Heart left ventricle (tissue), 16 donors: ENCODE measurements at regions of chr15 and their contacts with region 1.

Region 1: GRCh38 chr15:59492389-59493377 is 54.7 kb downstream of the FAM81A start:
- DNase-seq: peak in 4 of 5 donors; percentile 50 to 66 (median 60)
- ATAC-seq: peak; percentile 84 to 96 (median 95)
- H3K4me3 ChIP-seq: peak overlapping the region in 1 of 12 donors; percentile 27
- H3K27ac ChIP-seq: no peak overlapping the region
- H3K4me1 ChIP-seq: peaks cover 0 to 14% (median 6%) of the 10 kb centered on the region in 12 donors
- H3K27me3 ChIP-seq: no peaks in the 10 kb centered on the region
- CTCF ChIP-seq: peak; percentile 75 to 93 (median 84)
- POLR2A ChIP-seq: no peak

Region 2: DNA sequence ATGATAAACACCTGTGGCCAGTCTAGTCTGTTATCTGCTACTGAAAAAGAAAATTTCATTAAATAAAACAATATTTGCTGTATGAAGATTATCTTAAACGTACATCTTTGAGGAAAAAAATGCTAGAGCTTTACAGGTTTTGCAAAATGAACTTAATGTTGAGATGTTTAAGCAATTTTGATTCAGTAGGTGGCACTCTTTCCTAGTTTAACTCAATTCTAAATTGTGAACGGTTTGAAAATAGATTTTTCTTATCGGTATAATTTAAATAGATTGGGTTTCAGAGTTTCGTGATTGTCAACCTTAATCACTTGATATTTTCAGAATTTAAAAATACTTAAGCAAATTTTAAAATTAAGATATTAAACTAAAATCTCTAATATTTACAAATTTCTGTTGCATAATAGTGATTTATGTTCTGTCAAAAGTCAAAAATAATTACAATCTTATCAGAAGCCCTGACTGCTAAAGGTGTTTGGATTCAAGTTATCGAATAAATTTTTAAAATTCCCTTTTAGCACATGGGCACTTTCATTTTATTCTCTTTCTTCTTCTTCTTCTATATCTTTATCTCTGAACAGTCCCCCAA is 512.2 kb before region 1 on chr15:
- intact Hi-C with region 1: loop called (anchors 1 to 5 kb)
- DNase-seq: no peak
- ATAC-seq: no peak
- H3K4me3 ChIP-seq: no peak overlapping the region
- H3K27ac ChIP-seq: peak overlapping the region in 1 of 12 donors; percentile 35
- H3K4me1 ChIP-seq: peaks cover 0 to 52% (median 0%) of the 10 kb centered on the region in 12 donors
- H3K27me3 ChIP-seq: no peaks in the 10 kb centered on the region
- CTCF ChIP-seq: peak; percentile 32 to 68 (median 55)
- POLR2A ChIP-seq: no peak

Region 3: DNA sequence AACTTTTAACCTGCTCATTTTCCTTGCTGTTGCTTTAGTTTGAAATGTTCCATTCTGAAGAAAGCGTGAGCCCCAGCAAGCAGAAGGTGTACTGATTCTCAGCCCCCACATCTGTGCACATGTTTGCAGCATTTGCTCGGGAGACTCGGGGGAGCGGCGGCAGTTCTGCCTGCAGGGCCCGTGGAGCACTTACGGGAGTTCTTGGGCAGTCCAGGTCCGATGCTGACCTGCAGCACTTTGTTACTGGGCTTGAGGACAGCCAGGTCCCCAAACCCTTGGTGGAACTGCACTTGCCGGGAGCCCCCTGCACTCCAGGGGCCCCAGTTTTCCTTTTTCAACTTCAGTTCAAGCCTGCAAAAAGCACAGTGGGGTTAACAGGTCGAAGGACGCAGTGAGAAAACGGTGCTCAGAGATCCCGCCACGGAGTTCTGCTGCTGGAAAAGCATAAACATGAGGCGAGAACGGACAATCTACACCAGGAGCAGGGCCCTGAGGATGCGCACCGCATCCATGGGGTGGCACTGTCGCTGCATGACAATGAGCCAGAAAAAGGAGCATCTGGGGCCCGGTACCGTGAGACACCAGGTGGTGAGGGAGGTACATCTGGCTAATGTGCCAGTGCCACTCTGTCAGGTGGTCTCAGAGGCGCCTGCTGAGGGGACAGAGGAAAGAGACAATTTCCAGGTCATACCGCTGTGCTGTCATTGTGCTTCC is 331.6 kb before region 1 on chr15:
- intact Hi-C with region 1: loop called in 2 of 10 experiments (anchors 5 to 10 kb)
- DNase-seq: no peak
- ATAC-seq: no peak
- H3K4me3 ChIP-seq: no peak overlapping the region
- H3K27ac ChIP-seq: no peak overlapping the region
- H3K4me1 ChIP-seq: no peaks in the 10 kb centered on the region
- H3K27me3 ChIP-seq: no peaks in the 10 kb centered on the region
- CTCF ChIP-seq: peak in 6 of 12 donors; percentile 15 to 42 (median 22)
- POLR2A ChIP-seq: no peak

Region 4: GRCh38 chr15:59174835-59175831 is 317.6 kb before region 1 on chr15:
- intact Hi-C with region 1: loop called in 8 of 10 experiments (anchors 1 to 10 kb)
- DNase-seq: peak in 3 of 5 donors; percentile 30 to 61 (median 33)
- ATAC-seq: peak; percentile 78 to 89 (median 85)
- H3K4me3 ChIP-seq: no peak overlapping the region
- H3K27ac ChIP-seq: peak overlapping the region in 4 of 12 donors; percentile 27 to 89 (median 42)
- H3K4me1 ChIP-seq: peaks cover 0 to 57% (median 8%) of the 10 kb centered on the region in 12 donors
- H3K27me3 ChIP-seq: no peaks in the 10 kb centered on the region
- CTCF ChIP-seq: peak; percentile 40 to 68 (median 55)
- POLR2A ChIP-seq: no peak

Region 5: DNA sequence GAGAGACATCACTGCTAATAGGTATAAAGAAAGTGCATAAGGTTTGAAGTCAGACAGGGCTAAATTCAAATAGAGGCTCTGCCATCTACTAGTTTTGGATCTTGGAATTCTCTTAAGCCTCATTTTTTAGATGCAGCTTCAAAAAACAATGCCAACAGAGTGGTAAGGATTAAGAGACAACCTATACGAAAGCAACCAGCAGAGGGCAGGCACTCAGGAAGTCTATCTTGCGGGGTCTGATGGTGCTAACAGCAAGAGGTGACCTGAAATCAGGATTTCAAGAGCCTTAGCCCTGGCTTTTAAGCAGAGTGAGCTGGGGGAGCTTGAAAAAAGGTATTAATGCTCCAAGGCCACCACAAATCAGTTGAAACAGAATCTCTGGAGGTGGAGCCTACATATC is 245.3 kb before region 1 on chr15:
- intact Hi-C with region 1: loop called (anchors 2 to 10 kb)
- DNase-seq: peak in 4 of 5 donors; percentile 46 to 54 (median 50)
- ATAC-seq: peak in 3 of 4 donors; percentile 76 to 86 (median 77)
- H3K4me3 ChIP-seq: no peak overlapping the region
- H3K27ac ChIP-seq: no peak overlapping the region
- H3K4me1 ChIP-seq: peaks cover 0 to 17% (median 4%) of the 10 kb centered on the region in 12 donors
- H3K27me3 ChIP-seq: no peaks in the 10 kb centered on the region
- CTCF ChIP-seq: peak; percentile 47 to 72 (median 58)
- POLR2A ChIP-seq: no peak

Region 6: DNA sequence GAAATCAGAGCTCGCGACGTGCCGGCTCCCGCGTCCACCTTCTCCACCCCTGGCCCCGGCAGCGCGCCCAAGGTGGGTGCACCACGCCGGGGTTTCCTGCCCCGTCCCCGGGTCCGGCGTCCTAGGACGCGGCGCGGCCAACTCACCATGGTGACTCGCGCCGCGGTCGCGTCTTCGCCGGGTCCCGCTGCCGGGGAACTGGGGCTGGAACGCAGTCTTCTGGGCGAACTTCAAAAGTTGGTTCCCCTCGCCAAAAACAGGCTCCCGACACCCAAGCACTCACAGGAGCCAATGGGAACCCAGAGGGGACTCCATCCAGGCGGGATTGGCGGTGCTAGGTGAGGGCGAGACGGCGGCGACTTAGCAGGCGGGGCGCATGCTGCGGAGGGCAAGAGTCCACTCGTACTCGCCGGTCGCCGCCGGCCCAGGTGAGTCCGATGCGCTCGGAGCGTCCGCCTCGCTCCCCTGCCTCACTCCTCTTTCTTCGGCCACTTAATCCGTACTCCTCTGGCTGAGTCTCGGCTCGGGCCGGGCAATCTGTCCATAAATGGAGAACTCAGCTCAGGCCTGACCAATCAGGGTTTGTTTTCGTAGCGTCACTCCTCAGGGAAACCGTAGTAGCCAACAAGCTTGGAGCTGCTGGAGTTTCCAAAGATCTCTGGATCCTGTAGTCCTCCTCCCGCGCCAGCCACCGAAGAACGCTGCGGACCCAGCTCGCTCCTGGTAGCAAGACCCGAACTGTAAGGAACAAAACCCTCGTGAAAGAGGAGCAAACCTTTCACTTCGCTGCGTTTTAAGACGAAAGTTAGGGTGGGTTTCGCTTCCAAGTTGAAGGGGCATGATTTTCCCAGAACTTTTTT is 120.1 kb before region 1 on chr15 and contains the start of gene MYO1E:
- intact Hi-C with region 1: loop called in 9 of 10 experiments (anchors 2 to 10 kb)
- DNase-seq: peak; percentile 88 to 93 (median 91)
- ATAC-seq: peak; percentile 98
- H3K4me3 ChIP-seq: peak within 1 kb of the TSS; percentile 54 to 99 (median 88)
- H3K27ac ChIP-seq: peak within 1 kb of the TSS; percentile 82 to 98 (median 93)
- H3K4me1 ChIP-seq: peaks cover 0 to 29% (median 9%) of the 10 kb centered on the region in 12 donors
- H3K27me3 ChIP-seq: no peaks in the 10 kb centered on the region
- CTCF ChIP-seq: no peak
- POLR2A ChIP-seq: peak; percentile 87 to 96
- total RNA-seq, gene MYO1E: 12.0 to 98.6 (median 28.2) TPM